Activated CD4-positive, alpha-beta memory T cell treated with anti-CD3 and anti-CD28 coated beads for 36 hours (primary cell): ENCODE measurements at regions of chr2 and their contacts with region 1.

Region 1: DNA sequence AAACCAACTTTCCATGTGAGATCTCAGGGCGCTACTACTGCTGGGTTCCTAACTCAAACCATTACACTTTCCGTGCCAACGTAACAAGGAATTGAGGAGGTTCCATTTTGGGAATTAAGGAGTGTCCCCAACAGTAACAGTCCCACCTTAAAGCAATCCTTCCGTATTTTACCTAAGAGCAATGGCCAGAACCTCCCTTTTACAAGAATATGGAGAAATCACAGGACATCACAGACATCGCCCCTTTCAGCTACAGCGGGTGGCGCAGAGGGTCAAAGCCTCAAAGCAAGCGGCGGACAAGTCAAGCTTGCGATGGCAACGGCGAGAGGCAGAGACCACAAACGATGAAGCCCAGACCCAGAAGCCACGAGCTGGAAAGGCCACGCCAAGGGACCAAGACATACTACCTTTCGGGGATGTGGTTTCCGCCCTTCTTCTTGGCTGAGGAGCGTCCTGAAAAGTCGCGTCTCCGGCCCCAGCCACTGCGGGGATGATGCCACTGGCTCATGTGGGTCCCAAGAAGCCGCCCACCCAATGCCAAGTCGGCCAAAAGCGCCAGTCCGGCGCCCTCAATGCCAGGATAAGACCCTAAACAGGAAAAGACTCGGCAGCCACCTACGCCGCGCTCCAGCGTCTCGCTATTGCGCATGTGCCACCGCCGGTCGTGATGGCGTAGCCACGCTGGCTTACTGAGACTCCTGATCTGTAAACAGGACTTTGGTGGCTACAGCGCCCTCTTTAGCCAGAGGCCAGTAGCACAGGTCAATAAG is at the start of gene DUSP11:
- DNase-seq: peak; percentile 98
- H3K4me3 Mint-ChIP-seq: peak within 1 kb of the TSS; percentile 100
- H3K27ac Mint-ChIP-seq: peak within 1 kb of the TSS; percentile 97
- H3K4me1 Mint-ChIP-seq: peaks cover 25% of the 10 kb centered on the region
- H3K27me3 Mint-ChIP-seq: no peaks in the 10 kb centered on the region
- total RNA-seq, gene DUSP11: 28.0 to 28.5 TPM

Region 2: GRCh38 chr2:73697606-73698005 is 82.0 kb before region 1 on chr2:
- CTCF ChIA-PET with region 1: no interaction called
- POLR2A ChIA-PET with region 1: no interaction called
- intact Hi-C with region 1: loop called (anchors 10 kb)
- DNase-seq: no peak
- H3K4me3 Mint-ChIP-seq: no peak overlapping the region
- H3K27ac Mint-ChIP-seq: no peak overlapping the region
- H3K4me1 Mint-ChIP-seq: no peaks in the 10 kb centered on the region
- H3K27me3 Mint-ChIP-seq: peaks cover 10% of the 10 kb centered on the region

Region 3: GRCh38 chr2:73730810-73731209 is 48.8 kb before region 1 on chr2:
- CTCF ChIA-PET with region 1: no interaction called
- POLR2A ChIA-PET with region 1: no interaction called
- intact Hi-C with region 1: no loop called
- DNase-seq: no peak
- H3K4me3 Mint-ChIP-seq: no peak overlapping the region
- H3K27ac Mint-ChIP-seq: no peak overlapping the region
- H3K4me1 Mint-ChIP-seq: peaks cover 1% of the 10 kb centered on the region
- H3K27me3 Mint-ChIP-seq: no peaks in the 10 kb centered on the region

Region 4: GRCh38 chr2:73821227-73821626 is 41.6 kb after region 1 on chr2:
- CTCF ChIA-PET with region 1: interaction called, 5 read pairs
- POLR2A ChIA-PET with region 1: no interaction called
- intact Hi-C with region 1: loop called (anchors 1 kb)
- DNase-seq: peak; percentile 70
- H3K4me3 Mint-ChIP-seq: no peak overlapping the region
- H3K27ac Mint-ChIP-seq: peak overlapping the region; percentile 77
- H3K4me1 Mint-ChIP-seq: peaks cover 28% of the 10 kb centered on the region
- H3K27me3 Mint-ChIP-seq: peaks cover 5% of the 10 kb centered on the region

Region 5: DNA sequence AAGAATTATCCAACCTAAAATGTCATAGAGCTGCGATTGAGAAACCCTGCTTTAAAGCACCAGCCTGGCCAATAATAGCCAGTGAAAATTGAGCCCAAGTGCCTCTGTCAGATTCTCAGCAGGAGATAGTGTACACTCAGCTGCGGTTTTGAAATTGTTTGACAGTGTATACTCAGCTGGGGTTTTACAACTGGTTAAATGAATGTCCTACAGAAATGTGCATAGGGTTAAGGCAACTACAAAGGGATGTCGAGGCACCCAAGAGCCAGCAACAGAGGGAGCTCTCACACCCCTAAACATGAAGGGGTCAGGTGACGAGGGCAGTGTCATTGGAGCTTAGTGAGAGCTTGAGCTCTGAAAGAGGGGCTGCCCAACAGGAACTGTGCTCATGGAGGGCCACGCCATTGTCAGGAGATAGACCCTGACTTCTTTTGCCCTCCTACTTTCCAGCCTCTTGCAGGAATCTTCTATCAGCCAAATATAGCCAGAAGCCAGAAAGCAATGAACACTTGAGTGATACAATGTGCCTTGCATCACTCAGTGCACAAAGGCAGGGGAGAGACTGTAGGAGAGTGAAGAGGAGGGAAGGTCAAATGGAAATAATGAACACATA is 128.3 kb after region 1 on chr2:
- CTCF ChIA-PET with region 1: no interaction called
- POLR2A ChIA-PET with region 1: no interaction called
- intact Hi-C with region 1: no loop called
- DNase-seq: peak; percentile 75
- H3K4me3 Mint-ChIP-seq: no peak overlapping the region
- H3K27ac Mint-ChIP-seq: no peak overlapping the region
- H3K4me1 Mint-ChIP-seq: peaks cover 7% of the 10 kb centered on the region
- H3K27me3 Mint-ChIP-seq: no peaks in the 10 kb centered on the region